Activated T-helper 1 cell treated with anti-CD3 and anti-CD28 coated beads, Interleukin-12 subunit alpha, Interleukin-12 subunit beta, Interleukin-2, Interleukin-4 antibody, amounts not matched to agents 30 ng/mL and 10 ng/mL and 1 ng/mL, durations not matched to agents 14 hours and 24 hours and 36 hours (primary cell): ENCODE measurements at regions of chr6 and their contacts with region 1.

Region 1: DNA sequence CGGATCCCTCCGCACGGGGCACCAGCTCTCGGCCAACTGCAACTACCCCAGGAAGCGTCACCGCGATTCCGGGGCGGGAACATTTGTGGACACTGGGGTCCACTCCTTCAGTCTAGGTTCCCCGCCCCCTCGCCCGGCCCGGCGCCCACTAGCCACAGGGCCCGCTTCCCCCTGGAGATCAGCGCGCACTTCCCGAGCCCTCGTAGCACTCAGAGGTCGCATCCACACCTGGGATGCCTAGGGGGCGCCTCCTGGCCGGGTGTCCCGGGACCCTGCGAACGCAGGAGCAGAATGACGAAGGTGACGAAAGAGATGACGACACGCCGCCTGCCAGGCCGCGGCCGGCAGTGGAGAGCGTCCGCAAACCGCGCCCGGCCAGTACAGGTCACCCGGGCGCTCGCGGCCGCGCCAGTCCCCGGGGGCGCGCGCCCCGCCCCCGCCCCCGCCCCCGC is 309 bp upstream of the AIG1 start:
- DNase-seq: peak; percentile 72
- H3K4me3 Mint-ChIP-seq: peak overlapping the region; percentile 90
- H3K27ac Mint-ChIP-seq: peak overlapping the region; percentile 94
- H3K4me1 Mint-ChIP-seq: peaks cover 28% of the 10 kb centered on the region
- H3K27me3 Mint-ChIP-seq: no peaks in the 10 kb centered on the region

Region 2: DNA sequence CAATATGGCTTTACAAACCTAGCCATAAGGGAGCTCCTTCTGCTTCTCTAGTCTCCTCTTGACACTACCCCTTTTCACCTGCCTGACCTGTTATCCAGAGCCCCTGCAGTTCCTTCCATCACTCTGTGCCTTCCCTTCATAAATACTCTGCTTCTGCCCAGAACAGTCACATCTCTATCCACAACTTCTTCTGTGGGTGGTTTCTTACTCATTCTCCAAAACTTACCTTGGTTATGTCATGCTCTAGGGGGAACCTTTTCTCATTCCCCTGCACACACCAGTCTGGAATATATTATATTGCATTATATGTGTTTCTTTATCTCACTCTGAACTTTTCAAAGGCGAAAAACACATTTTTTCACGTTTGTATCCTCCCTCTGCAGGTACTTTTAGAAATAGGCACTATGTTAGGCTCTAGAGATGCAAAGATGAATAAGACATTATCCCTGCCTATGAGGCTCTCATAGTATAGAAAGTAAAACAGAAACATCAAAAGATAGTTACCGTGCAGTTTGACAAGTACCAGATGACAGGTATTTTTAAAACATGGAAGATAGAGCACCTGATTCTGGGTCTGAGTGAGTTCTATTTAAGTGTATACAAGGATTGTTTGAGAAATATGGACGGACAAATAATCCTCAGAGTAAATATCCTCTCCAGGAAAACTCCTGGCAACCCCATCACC is 51.8 kb after region 1 on chr6:
- intact Hi-C with region 1: no loop called
- DNase-seq: no peak
- H3K4me3 Mint-ChIP-seq: no peak overlapping the region
- H3K27ac Mint-ChIP-seq: no peak overlapping the region
- H3K4me1 Mint-ChIP-seq: peaks cover 6% of the 10 kb centered on the region
- H3K27me3 Mint-ChIP-seq: no peaks in the 10 kb centered on the region

Region 3: DNA sequence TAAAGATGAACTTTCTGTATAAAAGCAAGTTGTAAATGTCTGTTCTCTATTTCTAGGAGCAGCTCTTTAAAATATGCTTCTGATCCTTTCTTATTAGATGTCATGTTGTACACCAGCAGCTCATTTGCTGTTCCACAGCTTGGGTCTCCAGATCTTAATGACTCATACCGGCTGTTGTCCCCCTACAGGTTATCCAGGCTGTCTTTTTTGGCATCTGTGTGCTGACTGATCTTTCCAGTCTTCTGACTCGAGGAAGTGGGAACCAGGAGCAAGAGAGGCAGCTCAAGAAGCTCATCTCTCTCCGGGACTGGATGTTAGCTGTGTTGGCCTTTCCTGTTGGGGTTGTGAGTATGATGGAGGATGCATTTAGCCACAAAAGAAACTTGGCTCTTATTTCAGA is 76.3 kb after region 1 on chr6:
- intact Hi-C with region 1: loop called (anchors 5 kb)
- DNase-seq: no peak
- H3K4me3 Mint-ChIP-seq: no peak overlapping the region
- H3K27ac Mint-ChIP-seq: peak overlapping the region; percentile 70
- H3K4me1 Mint-ChIP-seq: peaks cover 30% of the 10 kb centered on the region
- H3K27me3 Mint-ChIP-seq: no peaks in the 10 kb centered on the region